Common myeloid progenitor, CD34-positive (primary cell): ENCODE measurements at regions of chr10 and their contacts with region 1.

Region 1: DNA sequence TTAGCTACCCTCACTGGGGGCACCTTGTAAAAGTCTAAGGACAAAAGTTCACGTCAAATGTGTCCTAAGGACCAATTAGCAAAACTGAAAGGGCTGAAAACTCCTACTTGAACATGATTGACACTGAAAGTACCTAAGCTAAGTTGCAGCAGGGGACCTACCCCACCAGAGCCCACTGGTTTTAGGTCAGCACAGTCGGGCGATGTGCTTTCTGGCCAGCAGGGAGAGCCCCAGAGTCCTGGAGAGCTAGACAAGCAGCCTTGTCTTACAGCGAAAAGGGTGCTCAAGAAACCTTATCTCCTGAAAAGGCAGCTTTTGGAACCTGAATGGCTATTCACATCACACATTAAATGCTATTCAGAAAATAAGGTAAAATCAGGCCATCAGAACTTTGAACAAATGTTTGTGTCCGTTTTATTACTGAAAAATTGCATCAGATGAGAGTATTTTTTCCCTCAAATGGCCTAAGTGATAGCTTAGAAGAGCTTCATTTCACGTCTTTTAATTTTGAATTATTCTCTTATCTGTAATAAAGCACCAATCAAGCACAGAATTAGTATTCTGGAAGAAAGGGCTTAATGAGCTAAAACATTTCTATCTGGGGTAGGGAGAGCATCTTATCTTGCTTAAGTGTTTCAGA is 52.2 kb upstream of the MKI67 start:
- DNase-seq: peak; percentile 54 to 77 (median 76)
- H3K4me3 ChIP-seq: no peak overlapping the region
- H3K27ac ChIP-seq: no peak overlapping the region
- H3K4me1 ChIP-seq: peaks cover 2 to 16% (median 13%) of the 10 kb centered on the region in 4 experiments
- H3K27me3 ChIP-seq: peaks cover 0 to 4% (median 0%) of the 10 kb centered on the region in 5 experiments

Region 2: GRCh38 chr10:128167926-128168520 is 10.4 kb before region 1 on chr10:
- CTCF ChIA-PET with region 1: interaction called, 12 read pairs
- POLR2A ChIA-PET with region 1: no interaction called
- DNase-seq: no peak
- H3K4me3 ChIP-seq: no peak overlapping the region
- H3K27ac ChIP-seq: no peak overlapping the region
- H3K4me1 ChIP-seq: no peaks in the 10 kb centered on the region
- H3K27me3 ChIP-seq: peaks cover 0 to 19% (median 7%) of the 10 kb centered on the region in 5 experiments